ENCODE measurements at regions of chr16 and their contacts with region 1.

Region 1: DNA sequence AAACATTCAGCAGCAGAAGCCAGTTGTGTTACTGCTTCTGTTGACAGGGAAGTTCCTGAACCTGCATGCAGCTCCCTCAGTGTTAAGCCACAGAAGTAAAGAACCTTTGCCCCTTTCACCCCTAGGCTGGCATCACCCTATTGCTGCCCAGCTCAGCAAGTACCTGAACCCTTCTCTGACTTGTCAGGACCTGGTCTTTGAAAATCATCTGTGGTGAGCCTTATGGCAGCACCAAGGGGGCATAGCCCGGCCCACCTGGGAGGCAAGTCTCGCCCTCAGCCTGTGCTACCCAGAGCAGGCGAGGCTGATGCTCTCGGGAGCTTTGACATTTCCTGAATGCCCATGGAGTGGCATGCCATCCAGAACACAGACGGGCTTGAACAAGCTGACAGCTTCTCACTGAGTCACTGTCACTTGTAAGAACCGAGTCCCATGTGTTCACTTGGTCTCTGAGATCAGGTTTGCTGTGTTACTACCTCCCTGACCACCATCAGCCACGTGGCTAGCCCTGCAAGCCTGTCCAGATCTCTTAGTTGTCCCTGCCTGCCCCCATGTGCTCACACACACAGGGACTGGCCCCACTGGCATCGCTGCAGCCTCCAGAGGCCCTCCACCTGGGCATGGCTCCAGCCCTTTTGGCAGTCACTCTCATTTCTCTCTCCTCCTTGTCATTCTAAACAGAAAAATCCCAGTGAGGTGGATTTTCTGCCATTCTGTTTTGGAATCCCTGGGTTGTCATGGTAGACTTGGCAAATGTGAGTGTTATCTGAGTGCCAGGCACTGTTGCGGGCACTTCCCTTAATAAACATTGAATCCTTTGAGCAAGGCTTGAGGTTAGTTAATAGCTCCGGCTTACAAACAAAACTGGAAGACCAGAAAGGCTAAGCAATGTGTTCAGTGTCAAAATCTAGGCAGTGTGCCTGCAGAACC is 2.9 kb upstream of the CARMIL2 start:
- DNase-seq: no peak
- CTCF ChIP-seq: no peak

Region 2: DNA sequence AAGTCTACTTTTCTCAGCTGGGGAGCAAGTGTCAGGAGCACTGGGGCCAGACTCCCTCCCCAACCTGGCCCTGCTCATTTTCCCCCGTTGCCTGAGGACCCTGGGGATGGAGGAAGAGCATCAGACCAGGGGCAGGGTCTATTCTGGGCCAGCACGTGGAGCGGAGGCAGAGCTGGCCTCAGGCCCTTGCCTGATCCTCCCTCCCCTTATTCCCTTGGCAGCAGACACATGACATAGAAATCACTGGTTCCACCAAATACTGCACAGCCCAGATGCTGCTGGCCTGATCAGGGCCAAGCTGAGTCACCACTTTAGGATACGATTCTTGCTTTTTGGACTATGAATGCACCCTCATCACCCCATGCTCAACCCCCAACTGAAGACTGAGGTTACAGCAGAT is 142.9 kb before region 1 on chr16:
- CTCF ChIA-PET with region 1: interaction called, 31 read pairs
- POLR2A ChIA-PET with region 1: no interaction called
- DNase-seq: no peak
- CTCF ChIP-seq: no peak

Region 3: DNA sequence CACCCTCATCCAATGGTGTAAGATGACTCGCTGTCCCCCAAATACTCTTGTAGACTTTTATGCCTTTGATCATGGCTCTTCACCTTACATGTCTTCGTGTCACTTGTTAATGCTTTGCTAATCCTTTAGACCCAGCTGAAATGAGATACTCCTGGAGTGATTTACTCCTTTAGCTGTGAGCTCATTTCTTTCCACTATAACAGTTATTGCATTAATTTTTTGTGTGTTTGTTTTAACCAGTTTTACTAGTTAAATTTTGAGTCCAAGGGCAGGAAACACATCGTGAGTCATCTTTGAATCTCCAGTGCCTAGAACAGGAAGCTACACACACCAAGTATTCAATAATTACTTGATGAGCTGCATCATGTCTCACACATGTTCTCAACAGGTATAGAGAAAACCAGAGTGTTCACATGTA is 86.2 kb before region 1 on chr16:
- CTCF ChIA-PET with region 1: interaction called, 53 read pairs
- POLR2A ChIA-PET with region 1: no interaction called
- DNase-seq: no peak
- CTCF ChIP-seq: no peak

Region 4: DNA sequence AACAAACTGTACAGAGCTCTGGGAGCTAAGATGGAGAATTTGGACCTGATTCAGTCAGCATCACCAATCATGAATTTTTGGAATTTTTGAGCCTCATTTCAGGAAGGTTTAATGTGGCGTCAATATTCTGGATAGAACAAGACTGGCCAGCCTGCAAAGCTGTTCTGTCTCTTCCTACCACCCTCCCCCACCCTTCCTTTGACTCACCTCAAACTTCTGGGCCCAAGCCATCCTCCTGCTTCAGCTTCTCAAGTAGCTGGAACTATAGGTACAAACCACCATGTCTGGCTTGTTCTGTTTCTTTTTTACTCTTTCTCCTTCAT is 47.0 kb before region 1 on chr16:
- CTCF ChIA-PET with region 1: interaction called, 26 read pairs
- POLR2A ChIA-PET with region 1: no interaction called
- DNase-seq: no peak
- CTCF ChIP-seq: no peak

Region 5: DNA sequence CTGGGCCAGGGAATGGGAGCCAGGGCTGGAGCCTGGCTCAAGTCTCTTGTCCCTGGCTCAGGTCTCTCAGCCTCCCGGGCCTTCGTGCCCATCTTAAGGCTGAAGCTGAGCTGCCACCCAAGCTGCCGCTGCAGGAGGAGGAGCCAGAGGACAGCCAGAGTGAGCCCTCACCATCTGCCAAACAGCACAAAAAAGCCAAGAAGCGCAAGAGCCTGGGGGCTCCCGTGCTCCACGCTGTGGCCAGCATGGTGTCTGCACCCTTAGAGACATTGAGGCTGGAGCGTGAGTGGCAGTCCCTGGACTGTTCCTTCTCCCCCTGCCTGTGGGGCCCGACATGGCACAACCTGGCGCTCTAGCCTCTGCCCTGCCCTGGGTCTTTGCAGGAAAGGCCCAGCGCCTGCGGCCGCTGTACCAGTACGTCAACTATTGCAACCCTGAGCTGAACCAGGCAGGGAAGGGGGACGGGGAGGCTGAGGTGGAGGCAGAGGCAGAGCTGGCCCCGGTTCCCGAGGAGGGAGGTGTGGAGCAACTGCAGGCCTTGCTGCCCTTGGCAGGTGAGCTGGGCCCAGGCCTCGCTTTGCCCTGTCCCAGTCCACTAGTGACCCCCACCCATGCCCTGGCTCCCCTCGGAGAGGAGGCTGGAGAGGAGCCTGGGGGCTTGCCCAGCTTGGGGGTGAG is 25.9 kb after region 1 on chr16:
- CTCF ChIA-PET with region 1: interaction called, 89 read pairs
- POLR2A ChIA-PET with region 1: no interaction called
- DNase-seq: peak; percentile 92
- CTCF ChIP-seq: peak; percentile 86

Measured in GM10248 (cell line).